Keratinocyte (primary cell): ENCODE measurements at regions of chr11 and their contacts with region 1.

Region 1: GRCh38 chr11:69240332-69241074 is 53.5 kb upstream of the MYEOV start:
- DNase-seq: no peak
- H3K4me3 ChIP-seq: no peak overlapping the region
- H3K27ac ChIP-seq: no peak overlapping the region
- H3K4me1 ChIP-seq: no peaks in the 10 kb centered on the region
- H3K27me3 ChIP-seq: peaks cover 2% of the 10 kb centered on the region
- CTCF ChIP-seq: peak; percentile 52 to 71 (median 69)

Region 2: DNA sequence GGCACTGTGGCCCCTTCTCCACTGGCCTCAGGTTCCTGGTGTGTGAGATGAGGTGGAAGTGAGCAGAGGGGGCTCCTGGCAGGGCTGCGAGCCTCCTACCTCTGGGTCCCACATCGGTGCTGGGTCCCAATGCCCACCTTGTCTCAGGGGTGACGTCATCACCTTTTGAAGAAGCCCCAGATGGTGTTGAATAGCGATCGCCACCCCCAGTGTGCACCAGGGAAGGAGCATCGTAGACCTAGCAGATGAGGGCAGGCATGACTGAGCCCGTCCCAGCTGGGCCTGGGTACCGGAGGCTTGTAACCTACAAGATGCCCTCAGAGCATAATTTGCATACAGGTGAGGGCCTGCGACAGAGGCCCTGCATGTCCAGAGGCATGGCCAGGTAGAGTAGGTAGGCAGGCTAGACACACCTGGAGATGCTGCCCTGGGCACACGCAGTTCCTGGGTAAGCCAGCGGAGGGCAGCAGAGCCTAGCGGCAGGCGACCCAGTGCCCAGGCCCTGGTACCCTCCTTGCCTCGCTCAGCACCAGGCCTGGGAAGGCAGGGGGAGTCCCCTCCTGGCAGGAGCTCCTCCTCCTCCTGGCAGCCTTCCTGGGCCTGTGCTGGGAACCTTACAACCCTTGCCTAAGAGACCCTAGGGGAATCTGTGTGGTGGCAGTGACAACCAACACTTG is 139.2 kb before region 1 on chr11:
- dilution Hi-C with region 1: loop called (anchors 25 kb)
- DNase-seq: no peak
- H3K4me3 ChIP-seq: no peak overlapping the region
- H3K27ac ChIP-seq: no peak overlapping the region
- H3K4me1 ChIP-seq: no peaks in the 10 kb centered on the region
- H3K27me3 ChIP-seq: peaks cover 11% of the 10 kb centered on the region
- CTCF ChIP-seq: peak; percentile 98 to 100 (median 100)